HepG2 (cell line): ENCODE measurements at regions of chr12 and their contacts with region 1.

Region 1: DNA sequence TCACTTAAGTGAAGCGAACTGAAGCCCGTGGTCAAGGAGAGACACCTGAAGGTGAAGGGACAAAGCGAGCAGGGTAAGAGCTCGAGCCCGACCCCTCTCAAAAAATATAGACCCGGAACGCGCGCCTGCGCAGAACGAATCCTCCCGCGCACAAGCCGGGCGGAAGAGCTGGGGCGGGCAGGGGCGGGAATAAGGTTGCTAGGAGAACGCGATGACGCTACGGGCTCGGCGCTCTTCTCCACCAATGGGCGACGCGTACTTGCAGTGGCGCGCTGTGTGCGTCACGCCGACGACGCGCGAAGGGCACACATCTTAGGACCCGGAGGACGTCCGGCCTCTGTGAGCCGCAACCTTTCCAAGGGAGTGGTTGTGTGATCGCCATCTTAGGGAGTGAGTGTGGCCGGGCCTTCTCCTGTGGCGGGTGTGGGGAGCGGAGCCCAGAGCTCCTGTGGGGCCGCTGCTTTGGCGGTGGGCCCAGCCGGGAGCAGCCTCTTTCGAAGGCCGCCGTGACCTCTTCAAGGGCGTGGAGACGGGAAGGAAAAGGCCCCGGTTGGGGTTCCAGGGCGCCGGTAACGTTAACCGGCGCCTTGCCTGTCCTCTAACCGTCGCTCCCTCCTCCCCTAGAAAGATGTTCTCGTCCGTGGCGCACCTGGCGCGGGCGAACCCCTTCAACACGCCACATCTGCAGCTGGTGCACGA is at the start of gene SLC25A3:
- DNase-seq: peak; percentile 94
- ATAC-seq: peak; percentile 98
- H3K4me3 ChIP-seq: peak within 1 kb of the TSS; percentile 88 to 98 (median 97)
- H3K27ac ChIP-seq: peak within 1 kb of the TSS; percentile 80
- H3K4me1 ChIP-seq: peaks cover 47% of the 10 kb centered on the region
- H3K27me3 ChIP-seq: no peaks in the 10 kb centered on the region; a peak in 1 of 5 replicates
- CTCF ChIP-seq: no peak
- EP300 ChIP-seq: peak; percentile 12 to 48; a peak in 1 of 4 replicates
- POLR2A ChIP-seq: peak; percentile 99 to 100
- RAD21 ChIP-seq: 0 out of 2 replicates have a peak, but pooled peaks have one; percentile 13
- total RNA-seq, gene SLC25A3: 829 and 1,060 TPM in 2 replicates

Region 2: DNA sequence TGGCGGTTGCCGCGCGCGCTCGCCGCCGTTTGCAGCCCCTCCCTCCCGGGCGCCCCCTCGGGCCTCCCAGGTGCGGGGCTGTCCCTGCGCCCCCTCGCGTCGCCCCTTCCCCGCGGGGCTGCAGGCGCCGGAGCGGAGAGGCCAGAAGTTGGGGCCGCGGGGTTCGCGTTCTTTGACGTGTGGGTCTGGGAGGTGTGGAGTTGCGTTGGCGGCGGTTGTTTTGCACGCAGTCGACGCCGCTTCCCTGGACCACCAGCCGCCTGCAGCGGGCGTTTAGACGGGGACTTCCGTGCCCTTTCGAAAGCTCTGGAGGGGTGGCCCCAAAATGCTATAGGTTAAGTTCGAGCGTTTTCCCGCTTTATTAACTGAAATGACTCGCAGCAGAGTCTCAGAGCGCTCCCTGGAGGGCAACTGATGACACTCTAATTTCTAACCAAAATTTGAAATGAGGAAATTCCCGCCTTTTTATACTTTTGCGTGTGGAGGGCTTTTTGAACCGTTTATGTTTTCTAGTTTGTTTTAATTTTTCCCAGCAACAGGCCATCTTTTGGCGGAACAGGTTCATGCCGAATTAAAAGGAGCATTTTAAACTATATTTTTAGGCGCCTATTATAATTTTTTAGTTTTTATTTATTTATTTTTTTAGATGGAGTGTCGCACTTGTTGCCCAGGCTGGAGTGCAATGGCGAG is 77.2 kb before region 1 on chr12:
- CTCF ChIA-PET with region 1: no interaction called
- POLR2A ChIA-PET with region 1: interaction called, 10 read pairs
- in situ Hi-C with region 1: no loop called
- intact Hi-C with region 1: loop called (anchors 5 kb)
- DNase-seq: peak; percentile 88
- ATAC-seq: peak; percentile 52
- H3K4me3 ChIP-seq: peak overlapping the region; percentile 82 to 94 (median 84)
- H3K27ac ChIP-seq: peak overlapping the region; percentile 99
- H3K4me1 ChIP-seq: peaks cover 41% of the 10 kb centered on the region
- H3K27me3 ChIP-seq: no peaks in the 10 kb centered on the region; a peak in 1 of 5 replicates
- CTCF ChIP-seq: peak; percentile 69
- EP300 ChIP-seq: no peak; a peak in 1 of 4 replicates
- POLR2A ChIP-seq: peak; percentile 17 to 45; a peak in 1 of 4 replicates
- RAD21 ChIP-seq: peak; percentile 58

Region 3: GRCh38 chr12:98578821-98579220 is 14.7 kb before region 1 on chr12:
- CTCF ChIA-PET with region 1: no interaction called
- POLR2A ChIA-PET with region 1: interaction called, 15 read pairs
- in situ Hi-C with region 1: no loop called
- intact Hi-C with region 1: loop called (anchors 1 kb)
- DNase-seq: no peak
- ATAC-seq: peak; percentile 42
- H3K4me3 ChIP-seq: peak overlapping the region in 1 of 3 experiments; percentile 19; a peak in 1 of 6 replicates
- H3K27ac ChIP-seq: no peak overlapping the region
- H3K4me1 ChIP-seq: peaks cover 34% of the 10 kb centered on the region
- H3K27me3 ChIP-seq: no peaks in the 10 kb centered on the region
- CTCF ChIP-seq: no peak
- EP300 ChIP-seq: no peak
- POLR2A ChIP-seq: no peak
- RAD21 ChIP-seq: no peak

Region 4: DNA sequence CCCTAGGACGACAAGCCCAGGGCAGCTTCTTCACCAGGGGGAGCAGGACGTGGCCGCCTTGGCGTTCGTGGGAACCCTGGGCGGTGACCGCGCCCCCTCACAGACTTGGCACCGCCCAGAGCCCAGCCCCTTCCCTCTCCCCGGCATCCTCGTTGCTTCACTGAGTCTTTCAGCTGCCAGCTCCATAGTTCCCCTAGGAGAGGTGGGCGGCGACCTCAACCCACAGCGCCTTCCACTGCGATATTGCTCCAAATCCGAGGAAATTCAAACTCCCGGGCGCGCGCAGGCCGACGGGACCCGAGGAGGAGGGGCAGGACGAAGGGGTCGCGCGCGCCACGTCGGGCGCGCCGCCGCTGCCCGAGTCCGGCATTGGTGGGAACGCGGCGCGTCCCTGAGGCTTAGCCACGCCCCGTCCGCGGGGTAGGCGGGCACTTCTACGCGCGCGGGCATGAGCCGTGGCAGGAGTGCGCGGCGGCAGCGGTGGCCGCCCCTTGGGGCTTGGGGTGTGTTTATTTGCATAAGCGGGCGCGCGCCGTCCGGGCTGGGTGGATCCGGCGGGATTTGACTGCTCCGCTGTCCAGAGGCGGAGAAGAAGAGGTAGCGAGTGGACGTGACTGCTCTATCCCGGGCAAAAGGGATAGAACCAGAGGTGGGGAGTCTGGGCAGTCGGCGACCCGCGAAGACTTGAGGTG is 51.4 kb after region 1 on chr12 and contains the starts of genes APAF1 and IKBIP:
- CTCF ChIA-PET with region 1: no interaction called
- POLR2A ChIA-PET with region 1: interaction called, 21 read pairs
- in situ Hi-C with region 1: no loop called
- intact Hi-C with region 1: loop called (anchors 1 kb)
- DNase-seq: peak; percentile 89
- ATAC-seq: peak; percentile 92
- H3K4me3 ChIP-seq: peak within 1 kb of the TSS; percentile 88 to 99 (median 95)
- H3K27ac ChIP-seq: peak within 1 kb of the TSS; percentile 84
- H3K4me1 ChIP-seq: peaks cover 40% of the 10 kb centered on the region
- H3K27me3 ChIP-seq: no peaks in the 10 kb centered on the region; a peak in 1 of 5 replicates
- CTCF ChIP-seq: peak; percentile 12; the same call in 1 of the 2 replicates
- EP300 ChIP-seq: no peak
- POLR2A ChIP-seq: peak; percentile 70 to 83; a peak in 3 of 4 replicates
- RAD21 ChIP-seq: no peak
- total RNA-seq, gene APAF1: 13.0 and 17.9 TPM in 2 replicates
- total RNA-seq, gene IKBIP: 50.4 and 55.5 TPM in 2 replicates